HEK293 (cell line): ENCODE measurements at regions of chr7 and their contacts with region 1.

Region 1: DNA sequence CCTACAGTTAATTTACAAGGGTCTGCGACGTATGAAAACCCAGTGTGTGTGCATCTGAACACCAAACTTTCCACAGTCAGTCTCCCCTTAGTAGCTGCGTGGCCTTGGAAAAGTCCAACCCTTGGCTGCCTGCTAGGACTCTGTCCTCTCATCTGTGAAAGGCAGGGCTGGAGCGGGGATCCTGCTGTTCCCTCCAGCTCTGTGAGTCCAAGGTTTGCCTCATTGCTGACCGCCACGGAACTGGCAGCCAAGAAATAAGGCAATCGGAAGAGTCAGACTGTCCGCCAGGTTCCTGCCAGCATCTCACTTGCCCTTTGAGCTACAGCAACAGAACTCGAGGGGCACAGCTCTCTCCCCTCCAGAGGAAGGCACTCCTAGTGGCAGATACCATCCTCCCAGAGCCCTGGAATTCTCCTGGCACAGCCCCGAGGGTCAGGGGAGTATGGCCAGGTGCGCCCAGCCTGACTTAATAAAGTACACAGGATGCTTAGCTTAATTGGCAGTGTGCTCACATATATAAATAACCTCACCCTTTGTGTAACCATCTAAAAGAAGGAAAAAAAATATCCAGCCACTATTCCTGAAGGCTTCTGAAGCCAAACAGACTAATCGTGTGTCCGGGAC is 530.1 kb upstream of the FOXK1 start:
- H3K4me3 ChIP-seq: no peak overlapping the region
- H3K27ac ChIP-seq: no peak overlapping the region
- H3K4me1 ChIP-seq: no peaks in the 10 kb centered on the region
- CTCF ChIP-seq: no peak

Region 2: GRCh38 chr7:4066206-4066605 is 85.8 kb before region 1 on chr7:
- CTCF ChIA-PET with region 1: interaction called, 10 read pairs
- POLR2A ChIA-PET with region 1: no interaction called
- H3K4me3 ChIP-seq: no peak overlapping the region
- H3K27ac ChIP-seq: no peak overlapping the region
- H3K4me1 ChIP-seq: no peaks in the 10 kb centered on the region
- CTCF ChIP-seq: no peak

Region 3: GRCh38 chr7:4819560-4820404 is 667.7 kb after region 1 on chr7:
- CTCF ChIA-PET with region 1: no interaction called
- POLR2A ChIA-PET with region 1: no interaction called
- H3K4me3 ChIP-seq: no peak overlapping the region
- H3K27ac ChIP-seq: no peak overlapping the region
- H3K4me1 ChIP-seq: no peaks in the 10 kb centered on the region
- CTCF ChIP-seq: no peak